Posterior vena cava (tissue), 2 donors: ENCODE measurements at regions of chr3 and their contacts with region 1.

Region 1: DNA sequence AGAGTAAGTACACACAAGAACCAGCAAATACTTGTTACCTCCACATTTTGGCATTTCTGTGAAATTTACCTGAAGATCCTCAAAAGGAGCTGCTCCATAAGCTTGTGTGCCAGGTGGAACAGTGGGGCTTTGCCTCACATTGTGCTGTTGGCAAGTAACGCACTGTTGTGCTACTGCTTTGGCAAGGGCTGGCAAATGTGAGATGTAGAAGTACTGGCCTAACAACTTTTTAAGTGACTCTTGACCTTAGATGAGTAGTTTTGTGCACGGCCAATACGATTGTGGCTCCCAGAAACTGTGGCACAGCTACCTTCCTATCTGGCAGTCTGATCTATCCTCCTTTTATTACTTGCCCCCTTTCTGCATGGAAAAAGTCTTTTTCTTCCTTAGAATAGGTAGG is 337.0 kb downstream of the KCNH8 start:
- DNase-seq: no peak

Region 2: DNA sequence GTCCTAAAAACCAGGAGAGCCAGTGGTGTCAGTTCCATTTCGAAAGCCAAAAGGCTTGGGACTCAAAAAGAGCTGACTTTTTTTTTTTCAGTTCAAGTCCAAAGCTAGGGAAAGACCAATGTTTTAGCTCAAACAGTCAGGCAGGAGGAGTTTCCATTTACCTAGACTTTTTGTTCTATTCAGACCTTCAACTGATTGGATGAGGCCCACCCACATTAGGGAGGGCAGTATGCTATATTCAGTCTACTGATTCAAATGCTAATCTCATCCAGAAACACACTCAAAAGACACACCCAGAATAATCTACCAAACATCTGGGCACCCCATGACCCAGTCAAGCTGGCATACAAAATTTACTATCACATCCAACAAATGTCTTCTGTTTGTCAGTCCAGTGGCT is 37.0 kb after region 1 on chr3:
- intact Hi-C with region 1: no loop called
- DNase-seq: no peak

Region 3: DNA sequence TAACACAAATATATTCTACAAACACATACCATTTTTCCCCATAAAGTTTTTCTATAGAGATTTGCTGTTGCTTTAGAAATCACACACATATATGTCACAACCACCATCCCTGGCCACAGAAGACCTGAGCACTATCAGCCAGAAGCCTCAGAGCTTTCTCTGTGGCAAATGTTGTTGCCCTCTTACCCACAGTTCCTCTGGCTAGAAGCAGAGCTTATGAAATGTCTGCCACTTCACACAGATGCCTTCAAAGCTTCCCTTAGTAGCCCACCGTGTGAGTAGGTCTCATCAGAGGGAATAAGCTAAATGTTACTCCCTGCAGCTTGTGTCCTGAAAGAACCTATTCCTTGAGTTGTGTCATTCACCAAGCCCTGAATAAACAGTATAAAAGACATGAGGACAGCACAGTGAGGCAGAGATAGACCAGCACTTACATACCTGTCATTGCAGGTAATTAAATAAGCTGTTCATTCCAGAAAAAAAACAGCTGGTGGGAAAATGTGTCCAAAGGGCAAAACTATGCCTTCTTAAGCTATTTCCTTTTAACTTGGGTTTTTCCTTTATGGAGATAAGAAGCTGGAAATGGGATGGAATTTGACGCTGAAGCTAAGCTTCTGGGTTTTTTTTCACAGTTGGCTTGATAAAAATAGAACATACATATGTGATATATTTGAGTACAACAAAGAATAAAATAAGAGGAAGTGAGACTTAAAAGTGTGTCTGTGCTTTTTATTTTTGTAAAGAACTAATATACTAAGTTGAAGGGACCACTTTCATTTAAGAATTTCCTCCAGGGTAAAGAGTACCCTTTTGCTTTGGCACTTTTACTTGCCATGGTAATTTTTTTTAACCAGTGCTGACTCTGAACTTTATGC is 54.5 kb after region 1 on chr3:
- intact Hi-C with region 1: loop called in 1 of 2 experiments (anchors 2 kb)
- DNase-seq: no peak